CD8-positive, alpha-beta T cell (primary cell): ENCODE measurements at regions of chr5 and their contacts with region 1.

Region 1: DNA sequence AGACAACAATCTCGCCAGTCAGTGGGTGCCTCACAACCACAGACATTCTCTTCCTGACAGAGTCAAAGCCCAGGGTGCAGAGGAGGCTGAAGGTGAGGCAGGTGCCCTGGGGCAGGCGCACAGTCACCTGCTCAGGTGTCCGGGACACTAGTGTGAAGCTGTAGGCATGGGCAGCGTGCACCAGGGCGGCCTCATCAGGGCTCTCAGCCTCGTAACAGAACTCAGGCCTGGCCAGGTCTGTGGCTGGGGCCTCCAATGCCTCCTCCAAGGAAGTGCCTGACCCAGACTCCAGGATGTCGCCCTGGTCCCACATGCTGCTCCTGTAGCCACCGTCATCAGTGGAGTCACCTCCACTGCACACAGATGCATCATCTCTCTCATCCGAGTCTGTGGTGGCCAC is 198.7 kb downstream of the PTTG1 start:
- DNase-seq: no peak
- ATAC-seq: no peak
- H3K4me3 ChIP-seq: no peak overlapping the region
- H3K4me3 Mint-ChIP-seq: no peak overlapping the region
- H3K27ac ChIP-seq: no peak overlapping the region
- H3K27ac Mint-ChIP-seq: no peak overlapping the region
- H3K4me1 ChIP-seq: no peaks in the 10 kb centered on the region
- H3K4me1 Mint-ChIP-seq: no peaks in the 10 kb centered on the region
- H3K27me3 ChIP-seq: no peaks in the 10 kb centered on the region
- H3K27me3 Mint-ChIP-seq: peaks cover 5% of the 10 kb centered on the region
- CTCF ChIP-seq: no peak

Region 2: GRCh38 chr5:160635046-160635445 is 14.6 kb after region 1 on chr5:
- CTCF ChIA-PET with region 1: no interaction called
- POLR2A ChIA-PET with region 1: no interaction called
- intact Hi-C with region 1: no loop called
- DNase-seq: no peak
- ATAC-seq: no peak
- H3K4me3 ChIP-seq: no peak overlapping the region
- H3K4me3 Mint-ChIP-seq: no peak overlapping the region
- H3K27ac ChIP-seq: no peak overlapping the region
- H3K27ac Mint-ChIP-seq: no peak overlapping the region
- H3K4me1 ChIP-seq: no peaks in the 10 kb centered on the region
- H3K4me1 Mint-ChIP-seq: no peaks in the 10 kb centered on the region
- H3K27me3 ChIP-seq: no peaks in the 10 kb centered on the region
- H3K27me3 Mint-ChIP-seq: peaks cover 7% of the 10 kb centered on the region
- CTCF ChIP-seq: no peak

Region 3: GRCh38 chr5:160646033-160646432 is 25.6 kb after region 1 on chr5:
- CTCF ChIA-PET with region 1: interaction called, 3 read pairs
- POLR2A ChIA-PET with region 1: no interaction called
- intact Hi-C with region 1: loop called in 1 of 2 experiments (anchors 1 kb)
- DNase-seq: no peak
- ATAC-seq: no peak
- H3K4me3 ChIP-seq: no peak overlapping the region
- H3K4me3 Mint-ChIP-seq: no peak overlapping the region
- H3K27ac ChIP-seq: no peak overlapping the region
- H3K27ac Mint-ChIP-seq: no peak overlapping the region
- H3K4me1 ChIP-seq: no peaks in the 10 kb centered on the region
- H3K4me1 Mint-ChIP-seq: no peaks in the 10 kb centered on the region
- H3K27me3 ChIP-seq: no peaks in the 10 kb centered on the region
- H3K27me3 Mint-ChIP-seq: no peaks in the 10 kb centered on the region
- CTCF ChIP-seq: no peak